ENCODE measurements at regions of chr5 and their contacts with region 1.

Region 1: DNA sequence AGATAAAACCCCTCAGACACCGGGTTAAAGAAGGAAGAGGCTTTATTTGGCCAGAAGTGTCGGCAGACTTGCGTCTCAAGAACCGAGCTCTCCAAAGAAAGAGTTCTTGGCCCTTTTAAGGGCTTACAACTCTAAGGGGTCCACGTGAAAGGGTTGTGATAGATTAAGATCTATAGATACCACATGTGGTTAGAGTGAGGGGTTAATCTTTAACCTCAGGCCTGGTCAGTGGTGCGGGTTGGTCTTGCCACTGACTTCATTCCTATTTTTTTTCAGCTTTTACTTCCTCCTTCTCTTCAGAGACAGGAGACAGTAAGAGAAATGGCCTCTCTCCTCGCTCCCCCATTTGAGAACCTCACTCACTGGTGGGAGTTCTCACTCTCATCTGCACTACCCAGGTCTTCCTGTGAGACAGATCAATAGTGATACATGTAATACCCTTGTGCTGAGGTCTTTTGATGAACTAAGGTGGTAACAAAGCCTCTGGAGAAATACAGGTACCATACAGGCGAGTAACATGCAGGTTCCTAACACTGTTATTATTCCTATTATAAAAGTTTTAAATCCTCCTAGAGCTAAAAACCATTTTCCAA is 52.4 kb upstream of the COX7C start:
- DNase-seq: no peak
- ATAC-seq: peak; percentile 83
- H3K4me3 ChIP-seq: no peak overlapping the region
- H3K27ac ChIP-seq: no peak overlapping the region
- H3K4me1 ChIP-seq: no peaks in the 10 kb centered on the region
- H3K27me3 ChIP-seq: no peaks in the 10 kb centered on the region
- CTCF ChIP-seq: no peak
- EP300 ChIP-seq: no peak
- POLR2A ChIP-seq: no peak
- RAD21 ChIP-seq: no peak

Region 2: GRCh38 chr5:86170194-86170593 is 395.1 kb before region 1 on chr5:
- CTCF ChIA-PET with region 1: no interaction called
- POLR2A ChIA-PET with region 1: no interaction called
- RAD21 ChIA-PET with region 1: no interaction called
- SMC1A ChIA-PET with region 1: no interaction called
- in situ Hi-C with region 1: no loop called
- intact Hi-C with region 1: no loop called
- DNase-seq: no peak
- ATAC-seq: no peak
- H3K4me3 ChIP-seq: no peak overlapping the region
- H3K27ac ChIP-seq: no peak overlapping the region
- H3K4me1 ChIP-seq: no peaks in the 10 kb centered on the region
- H3K27me3 ChIP-seq: no peaks in the 10 kb centered on the region
- CTCF ChIP-seq: no peak
- EP300 ChIP-seq: no peak
- POLR2A ChIP-seq: no peak
- RAD21 ChIP-seq: no peak

Region 3: GRCh38 chr5:86617756-86618576 is 52.7 kb after region 1 on chr5 and contains the start of gene COX7C:
- CTCF ChIA-PET with region 1: interaction called, 10 read pairs
- POLR2A ChIA-PET with region 1: no interaction called
- RAD21 ChIA-PET with region 1: no interaction called
- SMC1A ChIA-PET with region 1: no interaction called
- in situ Hi-C with region 1: no loop called
- intact Hi-C with region 1: no loop called
- DNase-seq: peak; percentile 97
- ATAC-seq: peak; percentile 96
- H3K4me3 ChIP-seq: peak within 1 kb of the TSS; percentile 71
- H3K27ac ChIP-seq: peak within 1 kb of the TSS; percentile 80
- H3K4me1 ChIP-seq: peaks cover 8% of the 10 kb centered on the region
- H3K27me3 ChIP-seq: no peaks in the 10 kb centered on the region
- CTCF ChIP-seq: no peak
- EP300 ChIP-seq: no peak
- POLR2A ChIP-seq: peak; percentile 91
- RAD21 ChIP-seq: no peak
- polyA plus RNA-seq, gene COX7C: 1,573 to 1,591 TPM